Mammary epithelial cell (primary cell): ENCODE measurements at regions of chr22 and their contacts with region 1.

Region 1: DNA sequence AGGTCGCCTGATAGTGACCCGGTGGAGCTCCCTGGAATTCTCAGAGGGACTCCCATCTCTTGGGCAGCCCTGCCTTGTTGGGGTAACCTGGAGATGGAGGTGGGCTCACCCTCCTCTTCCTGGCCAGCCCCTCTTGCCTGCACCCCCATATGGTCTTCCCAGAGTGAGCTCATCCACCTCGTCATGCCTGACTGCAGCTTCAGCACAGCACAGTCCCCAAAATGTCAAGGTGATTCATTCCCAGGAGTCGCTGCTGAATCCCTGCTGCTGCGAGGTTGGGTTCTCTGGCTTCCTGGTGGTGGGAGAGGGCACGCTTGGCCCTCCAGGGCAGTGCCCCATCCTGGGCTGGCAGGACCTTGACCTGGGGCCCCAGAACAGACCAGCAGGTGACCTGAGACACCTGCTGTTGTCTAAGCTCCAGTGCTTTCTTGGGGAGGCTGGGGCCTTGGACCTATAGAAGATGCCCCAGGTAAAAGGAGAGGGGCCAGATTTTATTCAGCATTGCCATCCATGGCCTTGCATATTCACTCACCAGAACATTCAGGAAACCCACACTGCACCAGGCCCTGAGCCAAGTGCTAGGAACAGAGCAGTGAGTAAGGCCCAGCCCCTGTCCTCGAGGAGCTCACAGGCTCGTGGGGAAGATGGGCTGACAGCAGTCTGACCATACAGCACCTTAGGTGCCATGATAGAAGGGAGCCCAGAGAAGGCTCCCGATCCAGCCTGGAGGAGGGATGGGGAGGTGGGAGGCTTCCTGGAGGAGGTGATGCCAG is 72.9 kb downstream of the CACNA1I start:
- DNase-seq: no peak
- H3K4me3 ChIP-seq: no peak overlapping the region
- H3K27ac ChIP-seq: no peak overlapping the region
- H3K4me1 ChIP-seq: no peaks in the 10 kb centered on the region
- H3K27me3 ChIP-seq: no peaks in the 10 kb centered on the region
- CTCF ChIP-seq: no peak

Region 2: GRCh38 chr22:39554151-39554550 is 89.3 kb before region 1 on chr22:
- CTCF ChIA-PET with region 1: no interaction called
- dilution Hi-C with region 1: loop called (anchors 5 kb)
- in situ Hi-C with region 1: no loop called
- intact Hi-C with region 1: no loop called
- DNase-seq: no peak
- H3K4me3 ChIP-seq: no peak overlapping the region
- H3K27ac ChIP-seq: no peak overlapping the region
- H3K4me1 ChIP-seq: peaks cover 2% of the 10 kb centered on the region
- H3K27me3 ChIP-seq: peaks cover 15% of the 10 kb centered on the region
- CTCF ChIP-seq: no peak

Region 3: DNA sequence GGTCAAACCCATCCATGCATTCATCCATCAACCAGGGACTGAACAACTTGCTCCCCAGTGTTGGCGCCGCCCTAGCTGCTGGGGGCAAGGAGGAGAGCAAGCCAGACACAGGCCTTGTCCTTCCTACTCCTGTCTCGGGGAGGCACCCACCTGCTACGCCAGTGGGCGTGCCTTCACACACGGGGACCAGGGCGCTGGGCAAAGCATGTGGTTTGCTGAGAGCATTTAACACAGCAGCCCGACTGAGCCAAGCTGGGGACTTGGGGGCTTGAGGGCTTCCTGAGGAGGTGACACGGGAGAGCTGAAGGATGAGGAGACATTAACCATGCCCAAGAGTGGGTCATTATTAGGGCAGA is 42.3 kb before region 1 on chr22:
- CTCF ChIA-PET with region 1: no interaction called
- dilution Hi-C with region 1: loop called (anchors 5 kb)
- in situ Hi-C with region 1: no loop called
- intact Hi-C with region 1: no loop called
- DNase-seq: no peak
- H3K4me3 ChIP-seq: no peak overlapping the region
- H3K27ac ChIP-seq: no peak overlapping the region
- H3K4me1 ChIP-seq: peaks cover 4% of the 10 kb centered on the region
- H3K27me3 ChIP-seq: no peaks in the 10 kb centered on the region
- CTCF ChIP-seq: no peak

Region 4: GRCh38 chr22:39723899-39724351 is 80.4 kb after region 1 on chr22:
- CTCF ChIA-PET with region 1: no interaction called
- dilution Hi-C with region 1: loop called (anchors 5 kb)
- in situ Hi-C with region 1: no loop called
- intact Hi-C with region 1: no loop called
- DNase-seq: peak; percentile 16
- H3K4me3 ChIP-seq: no peak overlapping the region
- H3K27ac ChIP-seq: no peak overlapping the region
- H3K4me1 ChIP-seq: no peaks in the 10 kb centered on the region
- H3K27me3 ChIP-seq: peaks cover 2% of the 10 kb centered on the region
- CTCF ChIP-seq: no peak